ENCODE measurements at regions of chr16 and their contacts with region 1.

Region 1: DNA sequence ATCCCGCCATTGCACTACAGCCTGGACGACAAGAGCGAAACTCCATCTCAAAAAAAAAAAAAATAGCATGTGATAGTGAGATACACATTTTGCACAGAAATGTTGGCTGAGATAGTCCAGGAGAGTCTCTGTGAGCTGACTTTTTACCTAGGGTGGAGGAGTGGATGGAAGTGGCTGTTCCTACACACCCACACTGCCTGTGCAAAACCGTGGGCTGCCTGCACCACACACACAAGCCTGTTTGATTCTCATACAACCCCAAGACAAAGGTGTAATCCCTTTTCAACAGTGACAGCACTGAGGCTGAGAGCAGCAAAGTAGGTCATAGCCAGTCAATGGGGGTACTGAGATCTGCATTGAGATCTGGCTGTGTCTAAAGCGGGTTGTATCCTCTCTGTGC is 86.8 kb downstream of the MARF1 start:
- H3K4me3 ChIP-seq: no peak overlapping the region
- H3K27ac ChIP-seq: no peak overlapping the region
- H3K4me1 ChIP-seq: no peaks in the 10 kb centered on the region
- CTCF ChIP-seq: no peak

Region 2: GRCh38 chr16:15754827-15755534 is 198.9 kb after region 1 on chr16:
- CTCF ChIA-PET with region 1: interaction called, 11 read pairs
- POLR2A ChIA-PET with region 1: no interaction called
- H3K4me3 ChIP-seq: no peak overlapping the region
- H3K27ac ChIP-seq: no peak overlapping the region
- H3K4me1 ChIP-seq: no peaks in the 10 kb centered on the region
- CTCF ChIP-seq: no peak